A549 (cell line): ENCODE measurements at regions of chr12 and their contacts with region 1.

Region 1: DNA sequence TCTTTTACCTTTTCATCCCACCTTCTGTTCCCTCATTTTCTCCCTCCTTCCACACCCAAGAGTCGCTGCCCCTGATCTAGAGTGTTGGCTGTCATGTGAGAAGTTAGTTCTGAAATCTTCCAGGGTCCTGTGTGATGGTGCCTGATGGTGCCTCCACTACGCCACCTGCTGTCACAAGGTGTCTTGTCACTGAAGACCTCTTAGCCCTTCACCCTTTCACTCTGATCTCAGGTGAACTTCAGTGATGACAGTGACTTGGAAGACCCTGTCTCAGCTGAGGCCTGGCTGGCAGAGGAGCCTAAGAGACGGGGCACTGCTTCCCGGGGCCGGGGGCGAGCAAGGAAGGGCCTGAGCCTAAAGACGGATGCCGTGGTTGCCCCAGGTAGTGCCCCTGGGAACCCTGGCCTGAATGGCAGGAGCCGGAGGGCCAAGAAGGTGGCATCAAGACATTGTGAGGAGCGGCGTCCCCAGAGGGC is 7.6 kb upstream of the PFDN5 start:
- DNase-seq: peak; percentile 79 to 82
- ATAC-seq: peak; percentile 84 to 91
- H3K4me3 ChIP-seq: no peak overlapping the region
- H3K27ac ChIP-seq: no peak overlapping the region
- H3K4me1 ChIP-seq: no peaks in the 10 kb centered on the region
- CTCF ChIP-seq: peak; percentile 78
- EP300 ChIP-seq: no peak
- POLR2A ChIP-seq: no peak
- RAD21 ChIP-seq: peak; percentile 79 to 84

Region 2: DNA sequence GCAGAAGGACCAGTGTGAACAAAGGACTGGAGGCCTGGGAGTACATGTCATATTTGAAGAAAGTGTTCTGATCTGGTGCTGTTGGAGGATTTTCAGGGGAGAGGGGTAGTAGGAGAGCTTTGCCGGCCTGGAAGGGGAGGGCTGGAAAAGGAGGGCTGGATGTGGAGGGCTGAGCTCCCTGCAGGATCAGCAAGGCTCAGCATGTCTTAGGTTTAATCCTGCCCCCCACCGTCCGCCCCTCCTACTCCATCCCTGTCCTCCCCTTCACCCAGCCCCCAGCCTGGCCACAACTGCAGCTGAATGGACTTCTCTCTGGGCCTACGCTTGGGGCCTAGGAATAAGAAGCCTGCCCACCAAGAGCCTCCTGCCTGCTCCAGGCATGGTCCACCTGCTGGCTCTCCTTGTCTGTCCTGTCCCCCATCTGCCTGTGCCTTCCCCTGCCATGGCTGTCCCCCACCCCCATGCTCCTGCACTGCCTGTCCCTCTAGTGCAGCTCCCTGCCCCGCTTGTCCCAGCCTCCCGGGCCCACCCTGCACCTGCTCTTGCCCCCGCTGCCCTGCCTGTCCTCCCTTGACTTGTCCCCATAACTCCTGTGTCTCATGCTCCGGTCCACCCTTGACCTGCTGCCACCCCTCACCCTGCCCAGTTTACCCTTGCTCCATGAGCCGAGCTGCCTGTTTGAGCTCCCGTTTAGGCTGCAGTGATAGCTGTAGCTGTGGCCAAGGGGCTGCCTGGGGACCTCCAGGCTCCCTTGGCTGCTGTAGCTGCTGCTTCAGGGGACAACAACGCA is 46.0 kb before region 1 on chr12:
- CTCF ChIA-PET with region 1: interaction called, 13 read pairs
- POLR2A ChIA-PET with region 1: no interaction called
- DNase-seq: no peak
- ATAC-seq: peak; percentile 24 to 41; a peak in 4 of 6 replicates
- H3K4me3 ChIP-seq: no peak overlapping the region
- H3K27ac ChIP-seq: no peak overlapping the region
- H3K4me1 ChIP-seq: no peaks in the 10 kb centered on the region
- CTCF ChIP-seq: no peak
- EP300 ChIP-seq: no peak
- POLR2A ChIP-seq: no peak
- RAD21 ChIP-seq: no peak

Region 3: GRCh38 chr12:53251477-53252348 is 36.1 kb before region 1 on chr12:
- CTCF ChIA-PET with region 1: interaction called, 68 read pairs
- POLR2A ChIA-PET with region 1: no interaction called
- DNase-seq: peak; percentile 83 to 87
- ATAC-seq: peak; percentile 90 to 92
- H3K4me3 ChIP-seq: peak overlapping the region; percentile 90
- H3K27ac ChIP-seq: peak overlapping the region; percentile 91 to 94
- H3K4me1 ChIP-seq: peaks cover 16% of the 10 kb centered on the region
- CTCF ChIP-seq: peak; percentile 47
- EP300 ChIP-seq: no peak
- POLR2A ChIP-seq: peak; percentile 92
- RAD21 ChIP-seq: peak; percentile 64 to 69

Region 4: DNA sequence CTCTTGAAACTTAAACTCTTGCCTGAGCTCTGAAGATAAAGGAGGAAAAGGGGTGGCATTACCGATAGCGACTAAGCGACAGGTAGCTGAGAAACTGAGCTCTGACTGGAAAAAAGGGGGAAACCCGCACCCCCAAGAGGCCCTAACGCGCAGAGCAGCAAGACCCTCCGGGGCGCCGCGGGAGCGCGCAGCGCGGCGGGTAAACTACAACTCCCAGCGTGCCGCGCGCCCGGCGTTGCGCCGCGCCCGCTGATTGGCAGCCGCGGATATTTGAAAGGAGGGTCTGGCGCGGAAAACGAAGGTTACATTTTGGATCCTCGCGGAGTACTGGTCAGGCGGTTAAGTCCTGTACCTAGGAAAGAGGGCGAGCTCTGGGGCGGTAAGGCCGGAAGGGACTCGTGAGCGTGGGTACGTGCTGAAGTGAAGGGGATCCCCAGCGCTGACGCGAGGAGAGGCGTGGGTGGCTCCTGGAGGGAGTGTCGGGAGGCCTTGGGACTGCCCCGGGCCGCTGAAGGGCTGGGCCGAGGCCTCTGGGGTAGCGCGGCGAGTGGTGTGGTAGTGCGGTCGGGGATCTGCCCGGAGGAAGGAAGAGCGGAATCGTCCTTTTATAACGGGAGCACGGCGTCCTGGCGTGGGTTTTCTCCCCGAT is 19.7 kb before region 1 on chr12 and contains the start of gene ESPL1:
- CTCF ChIA-PET with region 1: interaction called, 190 read pairs
- POLR2A ChIA-PET with region 1: interaction called, 3 read pairs
- DNase-seq: peak; percentile 82 to 92
- ATAC-seq: peak; percentile 92 to 94
- H3K4me3 ChIP-seq: peak within 1 kb of the TSS; percentile 65
- H3K27ac ChIP-seq: peak within 1 kb of the TSS; percentile 75 to 90
- H3K4me1 ChIP-seq: peaks cover 12% of the 10 kb centered on the region
- CTCF ChIP-seq: peak; percentile 21; the same call in 1 of the 3 replicates
- EP300 ChIP-seq: no peak
- POLR2A ChIP-seq: no peak
- RAD21 ChIP-seq: peak; percentile 41 to 47; a peak in 3 of 5 replicates
- polyA plus RNA-seq, gene ESPL1: 10.0 and 11.8 TPM in 2 replicates

Region 5: DNA sequence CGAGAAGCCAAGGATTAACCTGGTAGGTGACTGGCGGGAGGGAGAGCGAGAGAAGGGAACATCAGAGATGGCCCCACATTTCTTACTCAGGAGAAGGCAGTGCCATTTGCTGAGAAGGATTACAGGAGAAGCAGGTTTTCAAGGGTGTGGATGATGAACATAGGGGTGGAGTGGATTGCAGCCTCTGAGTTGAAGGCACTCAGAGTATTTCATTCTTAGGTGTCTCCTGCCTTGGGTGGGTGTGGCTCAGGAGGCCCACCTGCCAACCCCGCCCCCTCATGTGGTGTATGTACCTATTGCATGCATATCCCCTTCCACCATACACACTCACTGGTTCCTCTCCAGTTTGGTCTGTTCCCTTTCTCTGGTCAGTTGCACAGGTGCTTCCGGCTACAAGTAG is 13.3 kb before region 1 on chr12:
- CTCF ChIA-PET with region 1: interaction called, 190 read pairs
- POLR2A ChIA-PET with region 1: interaction called, 3 read pairs
- DNase-seq: no peak
- ATAC-seq: no peak
- H3K4me3 ChIP-seq: no peak overlapping the region
- H3K27ac ChIP-seq: no peak overlapping the region
- H3K4me1 ChIP-seq: peaks cover 5% of the 10 kb centered on the region
- CTCF ChIP-seq: no peak
- EP300 ChIP-seq: no peak
- POLR2A ChIP-seq: no peak
- RAD21 ChIP-seq: no peak